SK-N-SH (cell line): ENCODE measurements at regions of chr1 and their contacts with region 1.

Region 1: DNA sequence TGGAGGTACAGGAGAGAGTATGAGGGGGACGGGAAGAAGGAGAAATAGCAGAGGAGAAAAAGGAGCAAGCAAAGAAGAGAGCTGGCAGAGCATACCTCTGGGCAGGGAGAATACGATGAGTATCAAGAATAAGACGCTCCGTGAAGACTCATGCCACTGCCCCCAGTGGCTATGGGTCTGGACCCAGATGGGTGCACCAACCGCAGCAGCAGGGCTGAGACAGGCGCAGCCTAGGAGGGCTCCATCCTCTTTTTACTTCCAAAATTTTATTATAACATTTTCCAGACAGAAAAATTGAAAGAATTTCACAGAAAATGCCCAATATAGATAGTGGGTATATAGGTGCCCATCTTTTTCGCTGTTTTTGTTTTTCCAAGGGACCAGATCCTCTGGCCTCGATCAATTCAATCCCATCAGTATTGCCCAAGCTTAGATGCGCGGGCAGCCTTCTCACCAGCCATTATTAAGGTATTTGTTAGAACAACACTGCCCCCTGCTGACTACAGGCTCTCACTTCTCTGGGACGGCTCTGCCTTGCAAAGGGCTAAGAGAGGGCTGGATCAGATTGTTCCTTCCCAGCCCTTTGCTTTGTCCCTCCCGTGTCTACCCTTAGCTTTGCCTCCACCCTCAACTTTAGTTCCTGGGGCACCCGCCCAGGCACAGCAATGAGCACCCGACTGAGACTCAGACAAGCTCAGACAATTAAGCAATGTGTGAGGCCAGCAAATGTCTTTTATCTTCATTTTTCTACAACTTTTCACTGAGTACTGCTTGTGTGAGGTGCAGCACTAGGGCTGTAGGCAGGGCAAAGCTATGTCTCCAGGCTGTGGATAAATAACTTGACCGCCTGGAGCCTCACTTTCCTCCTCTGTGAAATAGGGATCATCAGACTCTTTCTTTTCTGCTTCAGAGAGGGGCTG is 17.5 kb upstream of the CAMK1G start:
- DNase-seq: peak; percentile 69
- H3K4me3 ChIP-seq: no peak overlapping the region
- H3K27ac ChIP-seq: no peak overlapping the region; a peak in 1 of 4 replicates
- H3K4me1 ChIP-seq: peaks cover 10 to 11% of the 10 kb centered on the region in 2 experiments; a peak in 3 of 4 replicates
- H3K27me3 ChIP-seq: no peaks in the 10 kb centered on the region
- CTCF ChIP-seq: peak; percentile 82
- EP300 ChIP-seq: no peak
- RAD21 ChIP-seq: peak; percentile 87

Region 2: DNA sequence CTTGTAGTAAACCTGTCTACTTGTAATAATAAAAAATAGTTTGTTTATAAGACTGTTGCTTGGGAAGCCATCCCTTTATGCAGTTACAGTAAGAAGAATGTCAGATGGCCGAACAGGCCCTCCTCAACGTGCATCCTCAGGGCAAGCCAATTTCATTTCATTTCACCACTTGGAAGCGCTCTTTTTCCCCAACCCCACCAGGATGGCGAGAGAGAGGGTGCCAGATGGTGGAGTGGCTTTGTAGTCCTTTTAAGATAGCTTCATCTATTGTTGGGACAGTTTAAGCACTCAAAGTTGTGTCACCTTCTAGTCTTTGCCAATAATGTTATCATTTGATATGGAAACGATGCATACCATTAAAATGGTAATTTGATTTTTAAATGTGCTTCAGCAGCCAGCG is 338.8 kb before region 1 on chr1:
- CTCF ChIA-PET with region 1: no interaction called
- POLR2A ChIA-PET with region 1: no interaction called
- DNase-seq: no peak
- H3K4me3 ChIP-seq: no peak overlapping the region
- H3K27ac ChIP-seq: no peak overlapping the region
- H3K4me1 ChIP-seq: peaks cover 0 to 15% of the 10 kb centered on the region in 2 experiments; a peak in 2 of 4 replicates
- H3K27me3 ChIP-seq: no peaks in the 10 kb centered on the region
- CTCF ChIP-seq: no peak
- EP300 ChIP-seq: no peak
- RAD21 ChIP-seq: no peak

Region 3: GRCh38 chr1:209513226-209513625 is 52.8 kb before region 1 on chr1:
- CTCF ChIA-PET with region 1: interaction called, 29 read pairs
- POLR2A ChIA-PET with region 1: no interaction called
- DNase-seq: peak; percentile 49
- H3K4me3 ChIP-seq: no peak overlapping the region; a peak in 1 of 4 replicates
- H3K27ac ChIP-seq: no peak overlapping the region
- H3K4me1 ChIP-seq: no peaks in the 10 kb centered on the region
- H3K27me3 ChIP-seq: no peaks in the 10 kb centered on the region
- CTCF ChIP-seq: peak; percentile 69
- EP300 ChIP-seq: no peak
- RAD21 ChIP-seq: peak; percentile 82

Region 4: GRCh38 chr1:209554761-209555611 is 11.0 kb before region 1 on chr1:
- CTCF ChIA-PET with region 1: interaction called, 19 read pairs
- POLR2A ChIA-PET with region 1: no interaction called
- DNase-seq: no peak
- H3K4me3 ChIP-seq: no peak overlapping the region
- H3K27ac ChIP-seq: no peak overlapping the region
- H3K4me1 ChIP-seq: peaks cover 0 to 2% of the 10 kb centered on the region in 2 experiments; a peak in 2 of 4 replicates
- H3K27me3 ChIP-seq: no peaks in the 10 kb centered on the region
- CTCF ChIP-seq: peak; percentile 16; the same call in 1 of the 2 replicates
- EP300 ChIP-seq: no peak
- RAD21 ChIP-seq: no peak

Region 5: GRCh38 chr1:209585672-209586071 is 19.7 kb after region 1 on chr1:
- CTCF ChIA-PET with region 1: interaction called, 139 read pairs
- POLR2A ChIA-PET with region 1: no interaction called
- DNase-seq: peak; percentile 81
- H3K4me3 ChIP-seq: peak overlapping the region; percentile 31 to 80
- H3K27ac ChIP-seq: peak overlapping the region in 1 of 2 experiments; percentile 89; a peak in 3 of 4 replicates
- H3K4me1 ChIP-seq: peaks cover 18 to 52% of the 10 kb centered on the region in 2 experiments
- H3K27me3 ChIP-seq: no peaks in the 10 kb centered on the region
- CTCF ChIP-seq: peak; percentile 28; the same call in 1 of the 2 replicates
- EP300 ChIP-seq: no peak; a peak in 1 of 4 replicates
- RAD21 ChIP-seq: peak; percentile 19; the same call in 1 of the 2 replicates

Region 6: DNA sequence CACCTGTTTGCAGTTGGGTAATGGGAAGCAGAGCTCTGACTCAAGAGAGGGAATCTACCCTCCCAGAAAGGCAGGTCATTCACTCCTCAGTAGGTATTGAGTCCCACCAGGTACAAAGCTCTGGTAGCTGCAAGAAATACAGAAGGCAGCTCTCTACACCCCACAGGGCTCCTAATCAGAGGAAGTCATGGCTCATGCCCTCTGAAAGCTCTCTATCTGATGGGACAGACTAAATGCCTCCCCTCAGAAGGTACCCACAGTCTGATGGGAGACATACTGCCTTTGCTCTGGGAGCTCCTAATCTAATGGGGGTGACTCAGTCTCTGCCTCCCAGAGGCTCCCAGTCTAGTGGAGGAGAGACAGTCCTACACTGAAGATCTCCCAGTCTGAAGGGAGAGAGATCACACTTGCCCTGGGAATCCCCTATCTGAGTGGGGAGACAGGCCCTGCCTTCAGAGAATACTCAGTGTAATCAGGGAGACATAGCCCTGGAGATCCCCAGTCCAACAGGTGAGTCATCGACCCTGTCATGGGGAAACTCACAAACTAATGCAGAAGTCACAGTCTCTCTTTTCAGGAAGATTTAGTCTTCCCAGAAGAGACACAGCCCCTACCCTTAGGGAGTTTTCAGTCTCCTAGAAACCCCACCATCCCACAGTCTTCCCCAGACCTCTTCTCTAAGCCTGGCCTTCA is 41.2 kb after region 1 on chr1:
- CTCF ChIA-PET with region 1: interaction called, 20 read pairs
- POLR2A ChIA-PET with region 1: no interaction called
- DNase-seq: no peak
- H3K4me3 ChIP-seq: no peak overlapping the region
- H3K27ac ChIP-seq: peak overlapping the region in 1 of 2 experiments; percentile 38; a peak in 2 of 4 replicates
- H3K4me1 ChIP-seq: peaks cover 0 to 8% of the 10 kb centered on the region in 2 experiments; a peak in 2 of 4 replicates
- H3K27me3 ChIP-seq: no peaks in the 10 kb centered on the region
- CTCF ChIP-seq: no peak
- EP300 ChIP-seq: no peak
- RAD21 ChIP-seq: no peak

Region 7: GRCh38 chr1:209627732-209628196 is 61.7 kb after region 1 on chr1:
- CTCF ChIA-PET with region 1: interaction called, 89 read pairs
- POLR2A ChIA-PET with region 1: no interaction called
- DNase-seq: peak; percentile 91
- H3K4me3 ChIP-seq: peak overlapping the region in 1 of 2 experiments; percentile 39; a peak in 1 of 4 replicates
- H3K27ac ChIP-seq: no peak overlapping the region
- H3K4me1 ChIP-seq: peaks cover 9 to 17% of the 10 kb centered on the region in 2 experiments; a peak in 3 of 4 replicates
- H3K27me3 ChIP-seq: no peaks in the 10 kb centered on the region
- CTCF ChIP-seq: peak; percentile 95
- EP300 ChIP-seq: no peak
- RAD21 ChIP-seq: peak; percentile 90

Region 8: GRCh38 chr1:209747580-209748262 is 181.7 kb after region 1 on chr1:
- CTCF ChIA-PET with region 1: no interaction called
- POLR2A ChIA-PET with region 1: no interaction called
- DNase-seq: no peak
- H3K4me3 ChIP-seq: peak overlapping the region in 1 of 2 experiments; percentile 48; a peak in 1 of 4 replicates
- H3K27ac ChIP-seq: peak overlapping the region in 1 of 2 experiments; percentile 55; a peak in 1 of 4 replicates
- H3K4me1 ChIP-seq: peaks cover 13 to 25% of the 10 kb centered on the region in 2 experiments
- H3K27me3 ChIP-seq: no peaks in the 10 kb centered on the region
- CTCF ChIP-seq: peak; percentile 39
- EP300 ChIP-seq: no peak
- RAD21 ChIP-seq: no peak